Activated T-helper 2 cell treated with anti-CD3 and anti-CD28 coated beads, Interferon-gamma antibody, Interleukin-2, Interleukin-4, amounts not matched to agents 10 μg/mL and 5 μg/mL and 100 μg/mL, durations not matched to agents 14 hours and 24 hours and 36 hours (primary cell): ENCODE measurements at regions of chr3 and their contacts with region 1.

Region 1: DNA sequence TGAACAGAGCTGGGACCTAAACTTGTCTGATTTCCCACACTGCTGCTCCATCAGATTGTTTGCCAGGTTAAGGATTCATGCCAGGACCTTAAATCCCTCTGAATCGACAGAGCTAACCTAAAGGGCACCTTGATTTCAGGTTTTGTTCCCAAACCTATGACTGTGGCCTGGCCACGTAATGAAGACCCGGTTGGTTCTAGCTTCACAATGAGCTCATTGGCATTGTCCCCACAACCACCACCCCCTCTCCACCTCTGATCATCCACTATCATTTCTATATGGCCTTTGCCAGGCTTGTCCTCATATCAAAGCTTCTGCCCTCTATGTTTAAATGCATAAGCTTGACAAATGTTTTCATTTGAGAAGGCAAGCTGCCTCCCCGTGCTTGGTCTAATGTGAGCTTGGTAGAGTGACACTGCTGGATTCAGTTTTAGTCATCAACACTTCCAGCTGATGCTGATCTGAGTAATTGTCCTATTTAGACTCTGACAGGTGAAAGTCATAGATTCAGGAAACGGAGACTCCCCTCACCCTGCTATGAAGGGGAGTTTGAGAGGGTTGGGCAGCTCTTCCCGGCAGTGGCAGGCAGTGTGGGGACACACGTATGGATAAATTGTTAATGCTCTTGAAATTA is 407.1 kb upstream of the CFAP20DC start:
- DNase-seq: peak; percentile 18
- H3K4me3 Mint-ChIP-seq: no peak overlapping the region
- H3K27ac Mint-ChIP-seq: no peak overlapping the region
- H3K4me1 Mint-ChIP-seq: peaks cover 36% of the 10 kb centered on the region
- H3K27me3 Mint-ChIP-seq: no peaks in the 10 kb centered on the region

Region 2: DNA sequence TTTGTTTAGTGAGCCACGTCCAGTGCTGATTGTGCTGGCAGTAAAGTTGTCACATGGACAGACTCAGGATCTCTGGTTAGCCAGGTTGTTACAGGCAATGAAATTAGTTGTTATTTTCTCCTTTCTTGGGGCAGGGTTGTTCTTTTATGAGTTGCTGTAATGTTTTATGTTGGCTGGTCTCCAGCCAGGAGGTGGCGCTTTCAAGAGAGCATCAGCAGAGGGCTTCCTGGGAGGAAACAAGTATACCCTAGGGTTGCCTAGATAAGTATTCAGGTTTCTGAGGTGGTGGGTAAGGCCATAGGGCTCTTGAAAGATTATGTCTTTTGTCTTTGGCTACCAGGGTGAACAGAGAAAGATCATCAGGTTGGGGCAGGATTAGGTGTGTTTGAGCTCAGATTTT is 392.7 kb before region 1 on chr3:
- intact Hi-C with region 1: no loop called
- DNase-seq: no peak
- H3K4me3 Mint-ChIP-seq: no peak overlapping the region
- H3K27ac Mint-ChIP-seq: no peak overlapping the region
- H3K4me1 Mint-ChIP-seq: no peaks in the 10 kb centered on the region
- H3K27me3 Mint-ChIP-seq: peaks cover 53% of the 10 kb centered on the region

Region 3: DNA sequence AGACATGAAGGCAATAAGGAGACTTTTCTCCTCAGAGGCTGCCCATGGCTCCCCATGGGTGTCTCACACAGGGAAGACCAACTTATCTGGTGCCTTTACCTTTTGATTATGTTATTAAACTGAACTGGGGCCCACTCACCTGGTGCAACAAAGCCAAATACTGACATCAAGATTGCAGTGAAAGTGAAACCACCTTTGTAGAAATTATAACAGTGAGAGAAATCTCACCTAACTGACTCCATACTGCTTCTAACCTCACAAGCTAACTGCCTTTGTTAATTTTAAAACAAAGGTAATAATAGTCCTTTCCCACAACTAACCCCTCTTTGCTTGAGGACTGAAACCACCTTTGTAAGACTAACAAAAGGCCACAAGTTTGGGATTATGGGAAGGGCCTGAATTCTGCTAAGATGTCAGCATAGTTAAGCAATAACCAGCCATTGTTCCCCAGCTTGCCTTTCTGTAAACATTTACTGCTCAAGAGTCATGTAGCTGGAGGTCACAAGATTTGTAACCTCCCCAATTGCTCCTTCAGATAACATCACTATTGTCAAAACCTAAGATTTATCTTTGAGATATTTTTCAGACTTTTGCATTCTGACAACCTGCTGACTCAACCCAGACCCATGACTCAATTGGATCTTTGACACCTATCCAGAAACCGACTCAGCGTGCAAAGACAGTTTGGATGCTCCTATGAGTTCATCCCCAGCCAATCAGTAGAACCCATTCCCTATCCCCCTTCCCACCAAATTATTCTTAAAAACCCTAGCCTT is 13.2 kb after region 1 on chr3:
- intact Hi-C with region 1: loop called (anchors 2 kb)
- DNase-seq: peak; percentile 23
- H3K4me3 Mint-ChIP-seq: no peak overlapping the region
- H3K27ac Mint-ChIP-seq: peak overlapping the region; percentile 40
- H3K4me1 Mint-ChIP-seq: peaks cover 43% of the 10 kb centered on the region
- H3K27me3 Mint-ChIP-seq: no peaks in the 10 kb centered on the region